BJ (cell line): ENCODE measurements at regions of chr19 and their contacts with region 1.

Region 1: GRCh38 chr19:54023191-54023590 is 31.8 kb downstream of the CACNG6 start:
- DNase-seq: no peak
- H3K4me3 ChIP-seq: no peak overlapping the region
- H3K27me3 ChIP-seq: no peaks in the 10 kb centered on the region
- CTCF ChIP-seq: no peak

Region 2: DNA sequence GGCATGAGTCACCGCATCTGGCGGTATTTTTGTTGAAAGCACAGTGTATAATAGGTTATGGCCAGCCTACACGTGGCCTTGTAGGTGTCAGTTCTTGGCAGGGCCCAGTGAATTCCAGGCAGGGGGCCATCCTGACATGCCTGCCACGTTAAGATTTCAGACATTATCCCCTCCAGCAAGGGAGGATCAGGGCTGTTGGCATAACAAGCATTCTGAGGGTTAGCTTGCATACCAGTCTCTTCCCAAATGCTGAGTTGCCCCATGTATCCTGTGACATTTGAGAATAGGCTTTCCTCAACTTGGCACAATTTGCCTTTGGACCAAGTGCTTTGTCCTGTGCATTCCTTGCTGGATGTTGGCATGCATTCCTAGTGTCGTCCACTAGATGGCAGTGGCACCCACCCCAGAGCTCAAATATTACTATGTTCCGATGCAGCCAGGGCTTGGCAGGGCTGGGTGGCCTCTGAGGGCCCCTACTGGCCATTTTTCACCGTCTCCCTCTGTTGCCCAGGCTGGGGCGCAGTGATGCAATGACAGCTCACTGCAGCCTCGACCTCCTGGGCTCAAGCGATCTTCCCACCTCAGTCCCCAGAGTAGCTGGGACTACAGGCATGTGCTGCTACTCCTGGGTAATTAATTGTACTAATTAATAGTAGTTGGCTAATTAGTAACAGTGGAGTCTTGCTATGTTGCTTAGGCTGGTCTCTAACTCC is 230.3 kb before region 1 on chr19:
- CTCF ChIA-PET with region 1: interaction called, 85 read pairs
- POLR2A ChIA-PET with region 1: no interaction called
- DNase-seq: peak; percentile 27
- H3K4me3 ChIP-seq: no peak overlapping the region
- H3K27me3 ChIP-seq: no peaks in the 10 kb centered on the region
- CTCF ChIP-seq: peak; percentile 99

Region 3: DNA sequence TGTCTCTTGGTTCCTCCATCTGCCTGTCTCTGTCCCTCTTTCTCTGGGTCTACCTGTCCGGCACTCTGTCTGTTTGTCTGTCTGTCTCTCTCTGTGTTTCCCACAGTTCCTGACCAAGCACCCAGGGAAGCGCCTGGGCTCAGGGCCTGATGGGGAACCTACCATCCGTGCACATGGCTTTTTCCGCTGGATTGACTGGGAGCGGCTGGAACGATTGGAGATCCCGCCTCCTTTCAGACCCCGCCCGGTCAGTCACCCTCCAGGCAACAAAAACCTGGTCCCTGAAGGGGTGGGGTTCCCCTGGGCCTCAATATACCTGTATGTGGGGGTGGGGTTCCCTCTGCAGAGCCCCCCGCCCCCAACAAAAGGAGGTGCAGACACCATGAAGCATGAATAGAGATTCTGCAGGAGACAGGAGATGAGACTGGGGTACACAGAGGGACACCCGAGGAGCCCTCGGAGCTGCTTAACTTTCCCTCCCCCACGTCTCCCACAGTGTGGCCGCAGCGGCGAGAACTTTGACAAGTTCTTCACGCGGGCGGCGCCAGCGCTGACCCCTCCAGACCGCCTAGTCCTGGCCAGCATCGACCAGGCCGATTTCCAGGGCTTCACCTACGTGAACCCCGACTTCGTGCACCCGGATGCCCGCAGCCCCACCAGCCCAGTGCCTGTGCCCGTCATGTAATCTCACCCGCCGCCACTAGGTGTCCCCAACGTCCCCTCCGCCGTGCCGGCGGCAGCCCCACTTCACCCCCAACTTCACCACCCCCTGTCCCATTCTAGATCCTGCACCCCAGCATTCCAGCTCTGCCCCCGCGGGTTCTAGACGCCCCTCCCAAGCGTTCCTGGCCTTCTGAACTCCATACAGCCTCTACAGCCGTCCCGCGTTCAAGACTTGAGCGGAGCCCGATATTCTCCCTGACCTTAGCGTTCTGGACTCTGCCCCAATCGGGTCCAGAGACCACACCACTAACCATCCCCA is 116.7 kb before region 1 on chr19:
- CTCF ChIA-PET with region 1: interaction called, 31 read pairs
- POLR2A ChIA-PET with region 1: no interaction called
- DNase-seq: no peak
- H3K4me3 ChIP-seq: no peak overlapping the region
- H3K27me3 ChIP-seq: peaks cover 33% of the 10 kb centered on the region
- CTCF ChIP-seq: peak; percentile 92

Region 4: DNA sequence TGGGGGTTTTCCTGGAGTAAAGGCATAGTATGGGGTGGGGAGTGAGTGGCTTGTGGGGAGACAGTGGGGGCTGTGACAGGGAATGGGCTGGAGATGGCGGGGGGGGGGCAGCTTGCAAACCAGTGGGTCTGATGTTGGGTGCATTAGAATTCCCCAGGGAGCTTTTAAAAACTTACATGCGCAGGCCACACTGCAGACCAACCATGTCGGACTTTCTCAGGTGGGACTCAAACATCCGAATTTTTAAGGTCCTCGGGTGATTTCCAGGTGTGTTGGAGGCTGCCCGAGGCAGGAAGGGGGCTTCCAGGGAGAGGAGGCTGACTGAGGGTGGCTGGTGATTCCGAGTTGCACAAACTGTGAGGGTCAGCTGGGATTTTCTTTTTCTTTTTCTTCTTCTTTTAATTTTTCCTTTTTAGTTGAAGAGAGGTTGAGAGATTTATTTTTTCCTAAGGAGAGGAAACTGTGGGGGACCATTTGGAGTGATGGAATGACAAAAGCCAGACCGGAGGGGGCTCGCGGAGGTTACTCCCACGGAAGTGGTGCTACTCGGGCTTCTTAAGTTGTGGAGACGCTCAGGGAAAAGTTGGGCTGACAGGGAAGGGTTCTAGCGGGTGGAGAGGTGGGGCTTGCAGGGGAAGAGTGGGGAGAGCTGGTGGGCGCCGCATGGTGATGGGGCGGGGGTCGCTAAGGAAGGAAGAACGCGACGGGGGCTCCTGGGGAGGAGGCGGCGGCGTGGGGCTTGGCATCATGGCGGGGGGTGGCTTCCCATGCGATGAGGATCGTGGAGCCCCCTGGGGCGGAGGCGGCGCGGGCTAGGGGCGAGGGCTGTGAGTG is 61.5 kb before region 1 on chr19:
- CTCF ChIA-PET with region 1: no interaction called
- POLR2A ChIA-PET with region 1: no interaction called
- DNase-seq: no peak
- H3K4me3 ChIP-seq: no peak overlapping the region
- H3K27me3 ChIP-seq: peaks cover 29% of the 10 kb centered on the region
- CTCF ChIP-seq: no peak

Region 5: GRCh38 chr19:54035215-54036178 is 12.3 kb after region 1 on chr19:
- CTCF ChIA-PET with region 1: interaction called, 28 read pairs
- POLR2A ChIA-PET with region 1: interaction called, 4 read pairs
- DNase-seq: peak; percentile 78
- H3K4me3 ChIP-seq: no peak overlapping the region
- H3K27me3 ChIP-seq: no peaks in the 10 kb centered on the region
- CTCF ChIP-seq: no peak

Region 6: GRCh38 chr19:54096617-54097129 is 73.5 kb after region 1 on chr19:
- CTCF ChIA-PET with region 1: interaction called, 17 read pairs
- POLR2A ChIA-PET with region 1: no interaction called
- DNase-seq: no peak
- H3K4me3 ChIP-seq: peak overlapping the region; percentile 30
- H3K27me3 ChIP-seq: no peaks in the 10 kb centered on the region
- CTCF ChIP-seq: peak; percentile 59